ENCODE measurements at regions of chr22 and their contacts with region 1.

Region 1: GRCh38 chr22:37043828-37044538 is 7.6 kb upstream of the KCTD17 start:
- DNase-seq: peak; percentile 39
- H3K4me3 Mint-ChIP-seq: no peak overlapping the region
- H3K27ac Mint-ChIP-seq: no peak overlapping the region
- H3K4me1 Mint-ChIP-seq: peaks cover 19% of the 10 kb centered on the region
- H3K27me3 Mint-ChIP-seq: no peaks in the 10 kb centered on the region

Region 2: DNA sequence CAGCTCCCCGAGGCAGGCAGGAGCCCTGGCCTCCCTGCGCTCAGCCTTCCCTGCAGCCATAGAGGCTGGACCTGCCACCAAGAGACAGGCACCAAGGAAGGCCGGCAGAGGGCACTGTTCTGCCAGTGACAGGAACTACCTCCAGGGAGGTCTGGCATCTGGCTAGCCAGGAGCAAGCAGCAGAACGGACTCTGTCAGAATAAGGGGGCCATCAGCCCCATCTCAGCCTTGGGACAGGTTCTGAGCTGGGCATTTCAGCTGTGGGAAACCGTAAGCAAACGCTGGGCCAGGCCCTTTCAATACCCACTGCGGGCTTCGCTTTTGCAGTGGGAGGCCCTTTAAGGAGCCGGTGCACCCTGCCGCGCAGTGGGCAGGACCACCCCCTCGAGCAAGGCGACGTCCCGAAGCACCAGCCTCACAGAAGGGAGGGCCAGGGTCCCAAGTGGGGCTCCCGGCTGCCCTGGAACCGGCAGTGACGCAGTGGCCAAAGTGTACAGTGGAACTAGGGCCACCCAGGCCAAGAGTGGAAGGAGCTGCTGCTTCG is 286.2 kb before region 1 on chr22:
- intact Hi-C with region 1: loop called (anchors 1 kb)
- DNase-seq: peak; percentile 63
- H3K4me3 Mint-ChIP-seq: no peak overlapping the region
- H3K27ac Mint-ChIP-seq: no peak overlapping the region
- H3K4me1 Mint-ChIP-seq: no peaks in the 10 kb centered on the region
- H3K27me3 Mint-ChIP-seq: peaks cover 8% of the 10 kb centered on the region

Region 3: GRCh38 chr22:36781656-36782627 is 262.0 kb before region 1 on chr22:
- intact Hi-C with region 1: loop called (anchors 1 kb)
- DNase-seq: peak; percentile 86
- H3K4me3 Mint-ChIP-seq: peak overlapping the region; percentile 52
- H3K27ac Mint-ChIP-seq: peak overlapping the region; percentile 95
- H3K4me1 Mint-ChIP-seq: peaks cover 38% of the 10 kb centered on the region
- H3K27me3 Mint-ChIP-seq: peaks cover 6% of the 10 kb centered on the region

Region 4: DNA sequence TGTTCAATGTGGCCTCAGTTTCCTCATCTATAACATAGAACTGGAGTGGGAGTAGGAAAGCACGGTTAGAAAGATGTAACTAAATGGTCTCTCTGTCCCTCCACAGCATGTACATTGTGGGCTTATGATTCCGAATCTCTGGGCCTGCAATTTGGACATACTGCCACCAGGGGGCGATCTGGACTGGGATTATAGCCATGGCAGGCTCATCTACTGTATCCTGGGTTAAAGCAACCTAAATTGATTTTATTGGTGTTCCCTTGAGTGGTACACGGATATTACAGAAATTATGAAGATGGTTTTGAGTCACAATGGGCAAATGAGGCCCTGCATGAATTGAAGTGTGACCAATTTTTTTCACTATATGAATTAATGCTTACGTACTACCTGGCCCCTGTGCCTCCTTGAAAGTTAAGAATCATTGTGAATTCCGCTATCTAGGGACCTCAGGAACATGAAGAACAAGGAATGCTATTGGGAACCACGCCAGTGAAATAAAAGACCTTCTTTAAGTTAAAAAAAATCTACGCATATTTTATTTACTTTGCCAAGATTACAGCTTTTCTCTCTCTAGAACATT is 57.7 kb before region 1 on chr22:
- intact Hi-C with region 1: no loop called
- DNase-seq: no peak
- H3K4me3 Mint-ChIP-seq: no peak overlapping the region
- H3K27ac Mint-ChIP-seq: no peak overlapping the region
- H3K4me1 Mint-ChIP-seq: peaks cover 4% of the 10 kb centered on the region
- H3K27me3 Mint-ChIP-seq: peaks cover 28% of the 10 kb centered on the region

Region 5: DNA sequence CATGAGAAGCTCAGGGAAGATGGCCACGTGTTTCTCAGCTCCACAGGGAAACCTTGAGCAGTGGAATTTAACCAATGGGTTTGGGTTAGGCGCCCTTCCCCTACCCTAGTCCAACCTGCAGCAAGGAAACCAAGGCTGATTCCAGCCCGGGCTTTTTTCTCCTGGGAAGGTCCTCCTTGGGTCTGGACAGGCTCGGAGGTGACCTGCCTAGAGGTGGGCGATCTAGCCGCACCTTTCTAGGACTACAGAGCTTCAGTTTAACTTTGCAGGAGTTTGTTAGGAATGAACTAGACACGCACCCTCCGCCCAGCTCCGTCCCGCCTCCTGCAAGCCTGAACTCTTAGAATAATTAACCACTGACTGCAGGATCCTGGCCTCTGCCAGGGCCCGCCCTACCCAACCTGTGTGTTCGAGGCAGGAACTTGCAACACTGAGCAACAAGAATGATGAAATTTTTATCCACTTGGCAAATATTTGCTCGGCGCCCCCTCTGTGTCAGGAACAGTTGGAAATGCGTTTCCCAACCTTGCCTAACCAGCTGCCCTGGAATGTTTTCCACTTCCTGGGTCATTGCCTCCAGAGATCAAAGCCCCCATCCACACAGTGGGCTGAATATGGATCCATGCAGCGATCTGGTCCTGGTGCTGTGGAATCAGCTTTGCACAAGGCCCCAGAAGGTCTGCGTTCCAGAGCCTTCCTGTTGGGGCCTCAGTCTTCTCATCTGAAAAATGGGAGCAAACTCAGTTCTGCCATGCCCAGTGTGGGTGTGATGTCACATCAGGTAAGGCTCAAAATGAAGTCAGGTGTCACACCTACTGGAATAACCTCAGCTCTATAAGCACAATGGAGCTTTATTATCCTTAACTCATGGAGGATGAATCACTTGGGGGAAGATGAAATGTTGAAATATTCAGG is 11.2 kb before region 1 on chr22:
- intact Hi-C with region 1: no loop called
- DNase-seq: no peak
- H3K4me3 Mint-ChIP-seq: no peak overlapping the region
- H3K27ac Mint-ChIP-seq: no peak overlapping the region
- H3K4me1 Mint-ChIP-seq: no peaks in the 10 kb centered on the region
- H3K27me3 Mint-ChIP-seq: peaks cover 4% of the 10 kb centered on the region

Region 6: GRCh38 chr22:37290737-37291136 is 246.8 kb after region 1 on chr22:
- intact Hi-C with region 1: no loop called
- DNase-seq: no peak
- H3K4me3 Mint-ChIP-seq: no peak overlapping the region
- H3K27ac Mint-ChIP-seq: peak overlapping the region; percentile 62
- H3K4me1 Mint-ChIP-seq: peaks cover 89% of the 10 kb centered on the region
- H3K27me3 Mint-ChIP-seq: no peaks in the 10 kb centered on the region

Measured in activated T-helper 1 cell treated with anti-CD3 and anti-CD28 coated beads, Interleukin-12 subunit alpha, Interleukin-12 subunit beta, Interleukin-2, Interleukin-4 antibody, amounts not matched to agents 30 ng/mL and 10 ng/mL and 1 ng/mL, durations not matched to agents 14 hours and 24 hours and 36 hours (primary cell).